ENCODE measurements at regions of chr2 and their contacts with region 1.

Region 1: GRCh38 chr2:85420536-85421259 is 2.2 kb downstream of the SH2D6 start:
- DNase-seq: peak; percentile 95
- ATAC-seq: peak; percentile 76
- H3K4me3 Mint-ChIP-seq: peak overlapping the region; percentile 38
- H3K27ac Mint-ChIP-seq: peak overlapping the region; percentile 84
- H3K4me1 Mint-ChIP-seq: peaks cover 21% of the 10 kb centered on the region
- H3K27me3 Mint-ChIP-seq: no peaks in the 10 kb centered on the region

Region 2: GRCh38 chr2:84077492-84077891 is 1343.2 kb before region 1 on chr2:
- CTCF ChIA-PET with region 1: no interaction called
- POLR2A ChIA-PET with region 1: no interaction called
- intact Hi-C with region 1: no loop called
- DNase-seq: peak; percentile 10
- ATAC-seq: no peak
- H3K4me3 Mint-ChIP-seq: no peak overlapping the region
- H3K27ac Mint-ChIP-seq: no peak overlapping the region
- H3K4me1 Mint-ChIP-seq: no peaks in the 10 kb centered on the region
- H3K27me3 Mint-ChIP-seq: peaks cover 1% of the 10 kb centered on the region

Region 3: DNA sequence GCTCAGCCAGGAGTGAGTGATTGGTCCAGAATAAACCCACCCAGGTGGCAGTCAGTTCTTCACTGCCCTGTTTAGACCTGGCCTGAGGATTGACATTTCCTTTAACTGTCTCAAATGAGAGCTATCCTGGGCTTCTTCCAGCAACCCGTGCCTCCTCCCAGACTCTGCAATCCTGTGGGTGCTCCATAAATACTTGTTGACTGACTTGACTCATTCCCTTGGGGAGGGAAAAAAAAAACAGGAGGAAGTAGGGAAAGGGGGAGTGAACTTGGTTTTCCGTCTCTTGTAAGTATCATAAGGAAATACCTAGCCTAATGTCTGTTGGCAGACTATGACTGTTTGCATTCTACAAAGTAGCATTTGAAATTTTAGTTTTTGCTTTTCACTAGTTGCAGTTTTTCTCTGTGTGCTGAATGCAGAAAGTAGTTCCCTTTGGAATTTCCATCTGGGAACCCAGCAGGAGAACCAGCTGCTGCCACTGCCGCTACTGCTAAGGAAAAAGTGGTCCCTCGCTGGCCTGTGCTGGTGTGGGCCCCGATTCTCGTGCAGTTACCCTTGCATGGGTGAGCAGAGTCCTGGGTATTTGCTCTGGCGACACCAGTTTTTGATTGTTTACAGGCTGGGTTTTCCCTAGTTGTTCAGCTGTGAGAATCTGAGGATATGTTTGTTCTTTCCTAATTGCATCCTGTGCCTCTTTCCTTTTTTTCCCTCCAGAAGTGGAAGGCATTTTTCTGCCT is 171.8 kb before region 1 on chr2:
- CTCF ChIA-PET with region 1: no interaction called
- POLR2A ChIA-PET with region 1: no interaction called
- intact Hi-C with region 1: no loop called
- DNase-seq: no peak
- ATAC-seq: no peak
- H3K4me3 Mint-ChIP-seq: no peak overlapping the region
- H3K27ac Mint-ChIP-seq: no peak overlapping the region
- H3K4me1 Mint-ChIP-seq: peaks cover 2% of the 10 kb centered on the region
- H3K27me3 Mint-ChIP-seq: peaks cover 6% of the 10 kb centered on the region

Region 4: GRCh38 chr2:85327822-85328617 is 92.7 kb before region 1 on chr2 and contains the start of gene TGOLN2:
- CTCF ChIA-PET with region 1: no interaction called
- POLR2A ChIA-PET with region 1: no interaction called
- intact Hi-C with region 1: loop called in 1 of 2 experiments (anchors 1 kb)
- DNase-seq: peak; percentile 98
- ATAC-seq: peak; percentile 91
- H3K4me3 Mint-ChIP-seq: peak within 1 kb of the TSS; percentile 86
- H3K27ac Mint-ChIP-seq: peak within 1 kb of the TSS; percentile 99
- H3K4me1 Mint-ChIP-seq: peaks cover 37% of the 10 kb centered on the region
- H3K27me3 Mint-ChIP-seq: no peaks in the 10 kb centered on the region
- total RNA-seq, gene TGOLN2: 84.0 to 90.4 TPM

Region 5: DNA sequence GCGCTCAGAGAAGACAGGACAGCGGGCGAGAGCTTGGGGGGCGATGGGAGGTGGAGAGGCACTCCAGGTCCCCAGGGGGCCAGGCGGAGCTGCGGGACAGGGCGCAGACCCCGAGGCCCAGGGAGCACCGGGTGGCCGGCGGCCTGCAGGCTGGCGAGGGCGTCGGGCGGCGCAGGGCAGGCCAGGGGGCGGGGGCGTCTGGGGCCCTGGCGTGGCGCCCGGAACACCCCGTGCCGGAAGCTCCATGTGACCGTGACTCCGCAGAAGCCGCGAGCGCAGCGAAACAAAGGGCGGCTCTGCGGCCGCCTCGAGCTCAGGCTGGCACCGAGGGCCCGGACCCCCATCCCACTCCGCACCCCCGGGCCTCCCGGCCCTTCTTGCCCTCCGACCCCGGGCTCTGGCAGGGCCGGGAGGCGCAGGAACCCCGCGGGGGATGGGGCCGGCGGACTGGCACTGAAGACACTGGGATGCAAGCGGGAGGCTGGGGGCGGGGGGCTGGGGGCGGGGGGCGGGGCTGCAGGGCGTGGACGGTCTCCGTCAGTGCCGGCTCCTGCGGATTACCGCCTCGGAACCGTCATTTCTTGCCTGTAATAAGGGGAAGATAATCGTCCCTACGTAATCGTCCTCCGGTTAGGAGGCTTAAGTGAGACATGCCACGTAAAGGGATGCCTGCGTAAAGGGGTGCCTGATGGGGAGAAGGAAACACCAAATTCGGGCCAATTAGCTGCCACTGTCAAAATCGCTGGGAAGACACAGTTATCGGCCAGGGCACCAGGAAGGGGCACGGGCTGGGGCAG is 17.0 kb after region 1 on chr2:
- CTCF ChIA-PET with region 1: interaction called, 6 read pairs
- POLR2A ChIA-PET with region 1: interaction called, 9 read pairs
- intact Hi-C with region 1: loop called (anchors 1 kb)
- DNase-seq: peak; percentile 87
- ATAC-seq: peak; percentile 84
- H3K4me3 Mint-ChIP-seq: peak overlapping the region; percentile 73
- H3K27ac Mint-ChIP-seq: peak overlapping the region; percentile 93
- H3K4me1 Mint-ChIP-seq: peaks cover 28% of the 10 kb centered on the region
- H3K27me3 Mint-ChIP-seq: no peaks in the 10 kb centered on the region

Region 6: DNA sequence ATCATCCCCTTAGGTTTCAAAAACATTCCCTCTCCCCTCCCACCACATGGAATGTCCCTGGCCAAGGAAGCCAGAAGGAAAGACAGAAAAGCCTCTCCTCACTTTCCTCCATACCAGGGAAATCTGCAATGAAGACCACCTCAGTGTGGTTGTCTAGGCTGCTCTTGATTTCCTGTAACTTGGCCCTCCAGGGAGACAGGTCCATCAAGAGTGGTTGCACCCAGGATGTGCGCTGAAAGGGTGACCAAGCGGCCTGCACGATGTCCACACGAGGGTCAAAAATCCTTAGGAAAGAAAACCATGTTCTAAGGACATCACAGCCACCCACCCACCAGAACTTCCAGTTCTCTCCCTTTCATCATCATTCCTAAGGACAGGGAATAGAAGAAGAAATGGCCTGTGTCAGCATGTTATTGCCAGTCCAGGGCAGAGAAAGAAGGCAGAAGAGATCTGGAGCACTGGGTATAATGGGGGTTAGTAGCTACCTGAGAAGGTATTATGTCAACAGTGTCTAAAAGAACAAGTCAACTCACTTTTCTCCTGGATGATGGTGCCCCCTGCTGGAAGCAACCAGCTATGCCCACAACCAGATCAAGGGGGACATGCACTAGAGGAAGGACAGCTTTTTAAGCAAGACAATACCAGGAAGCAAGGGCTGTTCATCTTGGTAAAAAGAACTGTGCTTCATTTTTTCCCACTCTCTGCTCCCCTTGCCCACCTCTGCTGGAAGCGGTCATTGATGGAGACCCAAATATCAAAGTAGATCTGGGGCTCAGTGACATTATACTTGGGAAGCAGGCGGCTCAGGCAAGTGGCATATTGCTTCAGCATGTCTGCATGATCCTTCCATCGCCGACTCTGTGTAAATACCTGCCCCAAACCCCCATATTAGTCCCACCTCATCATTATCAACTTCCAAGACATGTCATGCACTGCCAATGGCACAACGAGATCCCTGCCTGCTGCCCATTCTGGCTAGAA is 131.3 kb after region 1 on chr2:
- CTCF ChIA-PET with region 1: interaction called, 205 read pairs
- POLR2A ChIA-PET with region 1: interaction called, 17 read pairs
- intact Hi-C with region 1: loop called (anchors 1 kb)
- DNase-seq: peak; percentile 92
- ATAC-seq: peak; percentile 88
- H3K4me3 Mint-ChIP-seq: no peak overlapping the region
- H3K27ac Mint-ChIP-seq: no peak overlapping the region
- H3K4me1 Mint-ChIP-seq: peaks cover 2% of the 10 kb centered on the region
- H3K27me3 Mint-ChIP-seq: no peaks in the 10 kb centered on the region

Region 7: DNA sequence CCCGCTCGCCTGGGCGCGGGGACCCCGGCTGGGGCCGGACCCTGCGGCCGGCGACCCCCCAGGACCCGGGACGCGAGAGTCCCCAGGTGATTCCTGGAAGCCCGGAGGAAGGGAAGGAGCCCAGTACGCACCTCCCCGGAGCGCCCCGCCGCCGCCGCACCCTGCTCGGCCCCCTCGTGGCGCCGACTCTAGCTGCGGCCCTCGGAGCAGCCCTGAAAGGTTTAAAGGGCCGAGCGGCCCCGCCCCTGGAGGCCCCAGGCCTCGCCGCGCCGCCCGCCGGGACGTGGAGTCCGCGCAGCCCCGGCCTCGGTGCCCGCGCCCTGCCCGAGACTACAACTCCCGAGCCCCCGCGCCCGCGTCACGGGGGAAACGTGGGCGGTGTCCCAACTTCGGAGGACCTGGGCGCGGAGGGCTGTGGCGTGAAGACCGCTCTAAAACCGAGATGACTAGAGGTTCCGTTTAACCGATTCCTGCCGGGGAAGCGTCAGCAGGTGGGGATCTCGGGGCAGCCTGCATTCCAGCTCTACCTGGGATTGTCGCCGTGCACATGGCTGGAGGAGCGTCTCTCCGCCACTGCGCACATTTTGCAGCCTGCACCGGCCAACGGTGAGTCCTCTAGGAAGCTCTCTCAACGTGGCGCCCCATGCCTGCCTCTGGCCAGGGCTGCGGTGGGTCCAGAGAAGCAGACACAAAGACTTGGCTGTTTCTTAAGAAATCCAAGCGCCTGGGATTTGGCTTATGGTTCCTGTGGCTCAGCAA is 182.0 kb after region 1 on chr2 and contains the start of gene TMEM150A:
- CTCF ChIA-PET with region 1: no interaction called
- POLR2A ChIA-PET with region 1: no interaction called
- intact Hi-C with region 1: loop called in 1 of 2 experiments (anchors 1 kb)
- DNase-seq: peak; percentile 92
- ATAC-seq: peak; percentile 95
- H3K4me3 Mint-ChIP-seq: peak within 1 kb of the TSS; percentile 90
- H3K27ac Mint-ChIP-seq: peak within 1 kb of the TSS; percentile 78
- H3K4me1 Mint-ChIP-seq: peaks cover 27% of the 10 kb centered on the region
- H3K27me3 Mint-ChIP-seq: no peaks in the 10 kb centered on the region
- total RNA-seq, gene TMEM150A: 1.3 to 2.5 TPM

Region 8: DNA sequence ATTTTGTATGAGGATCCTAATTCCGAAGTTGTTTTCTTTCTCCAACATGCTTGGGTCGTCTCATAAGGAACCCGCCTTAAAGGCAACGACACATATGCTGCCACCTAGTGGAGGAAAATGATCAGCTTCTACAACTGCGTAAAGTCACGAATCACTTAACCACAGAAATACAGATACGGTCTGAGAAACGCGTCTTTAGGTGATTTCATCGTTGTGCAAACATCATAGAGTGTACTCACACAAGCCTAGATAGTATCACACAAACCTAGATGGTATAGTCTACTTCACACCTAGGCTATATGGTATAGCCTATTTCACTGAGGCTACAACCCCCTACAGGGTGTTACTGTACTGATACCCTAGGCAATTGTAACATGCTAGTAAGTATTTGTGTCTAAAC is 286.6 kb after region 1 on chr2:
- CTCF ChIA-PET with region 1: no interaction called
- POLR2A ChIA-PET with region 1: no interaction called
- intact Hi-C with region 1: loop called in 1 of 2 experiments (anchors 1 kb)
- DNase-seq: peak; percentile 72
- ATAC-seq: peak; percentile 95
- H3K4me3 Mint-ChIP-seq: no peak overlapping the region
- H3K27ac Mint-ChIP-seq: peak overlapping the region; percentile 44
- H3K4me1 Mint-ChIP-seq: peaks cover 21% of the 10 kb centered on the region
- H3K27me3 Mint-ChIP-seq: peaks cover 7% of the 10 kb centered on the region